ENCODE measurements at regions of chr11 and their contacts with region 1.

Region 1: DNA sequence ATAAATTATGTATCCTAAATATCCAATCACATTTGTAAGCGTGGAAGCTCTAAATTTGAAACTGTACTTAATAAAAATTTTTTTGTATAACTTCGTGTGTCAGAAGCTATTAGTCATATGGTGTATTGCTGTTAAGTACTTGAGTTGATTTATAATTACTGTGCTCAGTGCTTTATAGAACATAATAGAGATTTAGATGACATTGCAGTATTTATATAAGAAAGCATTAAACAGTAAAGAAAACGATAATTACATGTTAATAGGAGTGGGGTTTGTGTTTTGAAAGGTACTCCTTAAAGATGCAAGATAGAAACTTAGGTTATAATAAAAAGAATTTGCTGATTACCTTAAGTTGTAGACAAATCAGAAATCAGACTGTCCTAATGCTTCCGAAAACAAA is 5.9 kb upstream of the TCP11L1 start:
- DNase-seq: no peak
- H3K4me3 Mint-ChIP-seq: no peak overlapping the region
- H3K27ac Mint-ChIP-seq: no peak overlapping the region
- H3K4me1 Mint-ChIP-seq: no peaks in the 10 kb centered on the region
- H3K27me3 Mint-ChIP-seq: no peaks in the 10 kb centered on the region
- CTCF ChIP-seq: no peak

Region 2: GRCh38 chr11:33015621-33016551 is 17.6 kb before region 1 on chr11 and contains the start of gene DEPDC7:
- CTCF ChIA-PET with region 1: interaction called, 6 read pairs
- POLR2A ChIA-PET with region 1: interaction called, 20 read pairs
- intact Hi-C with region 1: no loop called
- DNase-seq: peak; percentile 72
- H3K4me3 Mint-ChIP-seq: peak within 1 kb of the TSS; percentile 78
- H3K27ac Mint-ChIP-seq: peak within 1 kb of the TSS; percentile 24
- H3K4me1 Mint-ChIP-seq: no peaks in the 10 kb centered on the region
- H3K27me3 Mint-ChIP-seq: no peaks in the 10 kb centered on the region
- CTCF ChIP-seq: no peak
- total RNA-seq, gene DEPDC7: 2.2 and 3.6 TPM in 2 replicates